ENCODE measurements at regions of chr1 and their contacts with region 1.

Region 1: DNA sequence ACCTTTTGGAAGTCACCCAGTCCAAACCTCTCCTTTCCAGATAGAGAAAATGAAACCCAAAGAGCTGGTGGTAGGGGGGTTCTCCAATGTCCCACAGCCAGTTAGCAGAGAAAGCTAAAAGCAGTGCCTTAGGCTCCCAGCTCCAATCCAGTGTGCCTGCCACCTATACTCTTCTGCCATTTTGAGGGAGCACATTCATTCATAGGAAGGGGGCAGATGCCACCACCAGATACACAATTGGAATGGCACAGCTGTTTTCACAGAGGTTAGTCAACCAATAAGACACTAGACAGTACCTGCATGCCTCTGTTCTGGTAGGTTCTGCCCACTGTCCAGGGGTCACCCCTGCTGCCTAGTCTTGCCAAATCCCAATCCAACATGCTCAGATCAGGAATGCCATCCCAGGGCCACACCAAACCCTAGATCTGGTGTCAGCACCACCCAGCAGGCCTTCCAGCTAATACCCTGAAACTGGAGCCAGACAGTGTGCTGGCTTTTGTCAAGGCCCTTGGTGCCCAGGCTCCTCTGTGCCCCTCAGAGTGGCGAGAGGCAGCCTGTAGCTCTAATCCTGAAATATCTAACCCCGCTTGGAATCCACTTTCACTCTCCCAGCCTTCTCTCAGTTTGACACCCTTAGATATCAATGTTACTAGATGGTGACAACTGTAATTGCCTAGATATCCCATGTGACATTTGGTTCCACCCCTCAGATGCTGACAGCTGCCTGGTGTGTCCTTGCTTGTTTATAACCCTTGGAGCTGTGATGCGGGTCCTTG is 178.6 kb downstream of the TGFBR3 start:
- DNase-seq: no peak
- ATAC-seq: peak; percentile 88

Region 2: GRCh38 chr1:91529856-91530255 is 177.4 kb before region 1 on chr1:
- intact Hi-C with region 1: loop called (anchors 5 kb)
- DNase-seq: no peak
- ATAC-seq: no peak

Region 3: GRCh38 chr1:91582431-91582921 is 124.8 kb before region 1 on chr1:
- intact Hi-C with region 1: loop called (anchors 5 kb)
- DNase-seq: no peak
- ATAC-seq: no peak

Region 4: DNA sequence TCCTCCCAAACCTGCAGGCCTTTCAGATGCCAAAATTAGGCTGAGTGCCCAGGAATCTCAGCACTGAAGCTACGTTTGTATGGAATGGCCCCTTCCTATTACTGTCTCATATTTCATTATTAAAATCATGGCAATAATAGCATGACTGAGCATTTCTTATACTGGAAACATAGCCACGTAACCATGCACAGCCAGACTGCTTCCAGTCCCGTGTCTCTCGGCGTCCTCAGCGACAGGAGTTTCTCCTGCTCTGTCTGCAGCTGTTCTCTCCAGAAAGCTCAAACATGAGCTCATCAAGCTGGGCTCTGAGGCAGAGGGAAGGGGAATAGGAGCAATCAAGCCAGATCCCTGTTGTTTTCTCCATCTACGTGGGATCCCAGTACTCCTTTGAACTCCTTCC is 102.7 kb before region 1 on chr1:
- intact Hi-C with region 1: loop called (anchors 1 kb)
- DNase-seq: no peak
- ATAC-seq: peak; percentile 20

Region 5: GRCh38 chr1:91635763-91636162 is 71.5 kb before region 1 on chr1:
- intact Hi-C with region 1: no loop called
- DNase-seq: no peak
- ATAC-seq: no peak

Region 6: DNA sequence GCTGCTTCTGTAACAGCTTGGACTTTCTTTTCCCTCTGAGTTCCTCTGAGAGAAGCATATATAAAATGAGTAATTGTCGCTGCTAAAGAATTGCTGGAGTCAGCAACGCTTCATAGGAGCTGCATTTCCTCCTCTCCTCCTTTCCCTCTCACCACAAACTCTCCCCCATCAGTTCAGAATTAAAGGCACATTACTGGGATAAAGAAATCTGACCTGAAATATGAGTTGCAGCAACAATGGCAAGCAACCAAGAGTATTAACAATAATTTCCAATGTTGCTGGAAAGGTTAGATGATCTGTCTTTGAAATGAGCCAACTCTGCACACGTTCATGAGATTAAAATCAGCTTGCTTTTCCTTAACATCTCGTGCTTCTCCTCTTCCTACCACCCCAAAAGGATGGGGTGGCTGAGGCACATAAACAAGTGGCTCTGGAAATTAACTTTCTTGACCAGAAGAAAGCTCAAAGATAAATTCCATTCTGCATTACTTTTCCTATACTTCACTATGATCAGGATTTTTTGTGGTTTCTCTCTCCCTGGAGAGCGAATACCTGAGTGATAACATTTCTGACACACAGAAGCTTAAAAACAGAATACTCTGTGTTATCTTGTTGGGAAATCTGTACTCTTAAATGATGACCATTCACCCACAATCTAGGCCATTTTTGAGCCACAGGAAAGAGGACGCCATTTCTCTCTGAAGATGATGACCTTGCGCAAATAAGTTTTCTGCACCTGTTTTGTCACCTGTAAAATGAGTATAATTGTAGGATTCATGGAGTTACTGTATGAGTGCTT is 88.5 kb after region 1 on chr1:
- intact Hi-C with region 1: loop called (anchors 5 kb)
- DNase-seq: no peak
- ATAC-seq: no peak

Region 7: DNA sequence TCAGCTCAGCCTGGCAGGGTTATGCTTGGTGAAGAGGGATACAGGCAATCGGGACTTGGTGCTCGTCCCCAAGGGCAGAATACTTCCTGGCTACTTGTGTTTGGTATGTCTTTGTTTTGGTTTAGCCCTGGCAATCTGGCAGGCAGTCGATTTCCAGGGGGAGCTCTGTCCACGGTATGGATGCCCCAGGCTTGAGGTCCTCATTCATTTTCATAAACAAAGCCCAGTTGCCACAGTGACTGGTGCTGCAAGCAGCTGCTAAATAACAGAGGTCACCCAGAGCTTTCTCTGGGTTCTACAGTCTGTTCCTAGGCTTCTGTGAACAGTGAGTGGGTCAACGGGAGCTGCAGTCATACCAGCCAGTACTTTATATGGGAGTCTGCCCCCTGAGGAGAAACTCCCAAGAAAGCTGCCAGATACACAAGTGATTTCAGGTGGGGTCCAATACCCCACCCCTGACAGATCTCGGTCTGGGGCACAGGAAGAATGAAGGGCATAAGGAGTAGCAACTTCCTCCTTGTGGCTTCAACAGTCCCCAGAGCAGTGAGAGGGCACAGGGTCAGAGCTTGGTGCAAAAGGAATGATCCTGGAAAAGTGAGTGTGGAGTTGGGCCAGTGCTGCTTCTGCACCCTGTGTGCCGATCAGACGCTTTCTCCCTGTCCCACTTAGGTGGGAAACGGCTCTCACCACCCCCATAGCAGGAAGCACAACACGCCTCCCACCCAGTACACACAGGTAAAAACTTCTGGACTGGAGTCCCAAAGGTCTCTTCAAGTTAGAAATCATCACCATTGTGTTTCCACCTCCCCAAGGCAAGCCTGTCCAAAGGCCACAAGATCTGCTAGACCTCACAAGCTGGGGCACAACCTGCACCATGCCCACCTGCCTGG is 123.2 kb after region 1 on chr1:
- intact Hi-C with region 1: loop called (anchors 1 kb)
- DNase-seq: peak; percentile 77
- ATAC-seq: peak; percentile 76

Measured in Right ventricle myocardium inferior (tissue), 1 donor.